Dendritic cell treated with granulocyte-macrophage colony-stimulating factor and Interleukin-4, amounts not matched to agents 40 ng/mL and 50 ng/mL, for 4 days (primary cell): ENCODE measurements at regions of chr1 and their contacts with region 1.

Region 1: GRCh38 chr1:16946646-16947045 is 24.9 kb downstream of the CROCC start:
- H3K4me3 Mint-ChIP-seq: no peak overlapping the region
- H3K27ac Mint-ChIP-seq: no peak overlapping the region
- H3K4me1 Mint-ChIP-seq: no peaks in the 10 kb centered on the region
- H3K27me3 Mint-ChIP-seq: no peaks in the 10 kb centered on the region

Region 2: GRCh38 chr1:16618719-16619118 is 327.9 kb before region 1 on chr1:
- intact Hi-C with region 1: loop called (anchors 1 kb)
- H3K4me3 Mint-ChIP-seq: no peak overlapping the region
- H3K27ac Mint-ChIP-seq: no peak overlapping the region
- H3K4me1 Mint-ChIP-seq: no peaks in the 10 kb centered on the region
- H3K27me3 Mint-ChIP-seq: no peaks in the 10 kb centered on the region

Region 3: DNA sequence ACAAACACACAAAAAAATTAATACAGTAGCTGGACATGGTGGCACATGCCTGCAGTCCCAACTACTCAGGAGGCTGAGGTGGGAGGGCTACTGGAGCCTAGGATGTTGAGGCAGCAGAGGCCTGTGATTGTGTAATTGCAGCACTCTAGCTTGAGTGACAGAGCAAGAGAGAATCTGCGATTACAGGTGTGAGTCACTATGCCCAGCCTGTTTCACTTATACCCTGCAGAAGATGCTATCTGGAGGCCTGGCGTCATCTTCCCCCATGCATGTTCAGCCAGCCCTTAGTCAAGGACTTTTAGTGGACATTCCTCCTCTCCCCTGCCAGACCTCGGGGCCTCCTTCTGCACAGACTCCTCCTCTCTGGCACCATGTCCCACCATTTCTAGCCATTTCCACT is 529.1 kb after region 1 on chr1:
- intact Hi-C with region 1: no loop called
- H3K4me3 Mint-ChIP-seq: no peak overlapping the region
- H3K27ac Mint-ChIP-seq: no peak overlapping the region
- H3K4me1 Mint-ChIP-seq: no peaks in the 10 kb centered on the region
- H3K27me3 Mint-ChIP-seq: peaks cover 3% of the 10 kb centered on the region